Calu3 (cell line): ENCODE measurements at regions of chr4 and their contacts with region 1.

Region 1: DNA sequence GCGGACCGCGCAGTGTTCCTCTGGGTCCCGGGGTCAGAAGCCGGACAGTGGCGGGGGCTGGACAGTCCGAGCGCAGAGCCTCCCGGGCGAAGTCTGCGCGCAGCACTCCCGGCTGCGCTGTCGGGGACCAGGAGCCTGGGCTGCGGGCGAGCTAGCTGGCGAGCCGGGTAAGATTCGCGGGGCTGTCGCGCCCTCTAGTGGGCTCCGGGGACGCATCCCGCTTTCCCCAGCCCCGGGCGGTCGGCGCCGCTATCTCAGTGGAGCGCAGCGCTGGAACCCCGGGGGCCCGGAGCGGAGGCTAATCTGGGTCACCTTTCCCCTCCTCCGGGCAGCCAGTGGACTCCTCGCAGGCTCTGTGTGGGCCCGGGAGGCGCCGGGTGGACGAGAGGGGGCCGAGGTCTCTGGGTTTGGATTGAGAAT is 4.2 kb downstream of the PDGFRA start:
- DNase-seq: peak; percentile 86
- H3K4me3 Mint-ChIP-seq: peak overlapping the region; percentile 76
- H3K27ac Mint-ChIP-seq: no peak overlapping the region
- H3K4me1 Mint-ChIP-seq: peaks cover 18% of the 10 kb centered on the region
- H3K27me3 Mint-ChIP-seq: peaks cover 53% of the 10 kb centered on the region
- CTCF ChIP-seq: peak; percentile 40

Region 2: DNA sequence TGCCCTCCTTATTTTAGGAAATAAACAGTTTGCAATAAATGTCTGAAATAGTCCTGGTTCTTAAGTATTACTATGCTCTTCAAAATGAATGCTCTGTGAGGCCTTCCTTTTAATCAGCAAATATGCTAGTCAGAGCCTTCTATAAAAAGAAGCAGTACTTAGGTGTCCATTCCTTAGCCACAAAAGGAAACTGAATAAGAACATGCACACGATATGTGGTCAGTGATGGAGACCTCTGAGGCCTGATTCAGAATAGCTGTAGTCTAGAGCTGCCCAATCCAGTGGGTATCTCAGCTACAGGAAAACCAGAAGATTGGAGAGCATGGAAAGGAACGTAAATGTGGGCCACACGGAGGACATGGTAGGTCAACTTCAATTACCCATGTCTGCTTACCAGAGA is 1229.3 kb before region 1 on chr4:
- CTCF ChIA-PET with region 1: no interaction called
- intact Hi-C with region 1: loop called (anchors 5 kb)
- DNase-seq: no peak
- H3K4me3 Mint-ChIP-seq: no peak overlapping the region
- H3K27ac Mint-ChIP-seq: no peak overlapping the region
- H3K4me1 Mint-ChIP-seq: no peaks in the 10 kb centered on the region
- H3K27me3 Mint-ChIP-seq: no peaks in the 10 kb centered on the region
- CTCF ChIP-seq: no peak

Region 3: GRCh38 chr4:53196882-53197771 is 1036.2 kb before region 1 on chr4:
- CTCF ChIA-PET with region 1: no interaction called
- intact Hi-C with region 1: loop called (anchors 2 kb)
- DNase-seq: peak; percentile 9
- H3K4me3 Mint-ChIP-seq: no peak overlapping the region
- H3K27ac Mint-ChIP-seq: no peak overlapping the region
- H3K4me1 Mint-ChIP-seq: no peaks in the 10 kb centered on the region
- H3K27me3 Mint-ChIP-seq: no peaks in the 10 kb centered on the region
- CTCF ChIP-seq: peak; percentile 41

Region 4: GRCh38 chr4:53507671-53508286 is 725.5 kb before region 1 on chr4:
- CTCF ChIA-PET with region 1: interaction called, 3 read pairs
- intact Hi-C with region 1: loop called (anchors 5 kb)
- DNase-seq: peak; percentile 37
- H3K4me3 Mint-ChIP-seq: peak overlapping the region; percentile 78
- H3K27ac Mint-ChIP-seq: peak overlapping the region; percentile 72
- H3K4me1 Mint-ChIP-seq: no peaks in the 10 kb centered on the region
- H3K27me3 Mint-ChIP-seq: no peaks in the 10 kb centered on the region
- CTCF ChIP-seq: no peak

Region 5: DNA sequence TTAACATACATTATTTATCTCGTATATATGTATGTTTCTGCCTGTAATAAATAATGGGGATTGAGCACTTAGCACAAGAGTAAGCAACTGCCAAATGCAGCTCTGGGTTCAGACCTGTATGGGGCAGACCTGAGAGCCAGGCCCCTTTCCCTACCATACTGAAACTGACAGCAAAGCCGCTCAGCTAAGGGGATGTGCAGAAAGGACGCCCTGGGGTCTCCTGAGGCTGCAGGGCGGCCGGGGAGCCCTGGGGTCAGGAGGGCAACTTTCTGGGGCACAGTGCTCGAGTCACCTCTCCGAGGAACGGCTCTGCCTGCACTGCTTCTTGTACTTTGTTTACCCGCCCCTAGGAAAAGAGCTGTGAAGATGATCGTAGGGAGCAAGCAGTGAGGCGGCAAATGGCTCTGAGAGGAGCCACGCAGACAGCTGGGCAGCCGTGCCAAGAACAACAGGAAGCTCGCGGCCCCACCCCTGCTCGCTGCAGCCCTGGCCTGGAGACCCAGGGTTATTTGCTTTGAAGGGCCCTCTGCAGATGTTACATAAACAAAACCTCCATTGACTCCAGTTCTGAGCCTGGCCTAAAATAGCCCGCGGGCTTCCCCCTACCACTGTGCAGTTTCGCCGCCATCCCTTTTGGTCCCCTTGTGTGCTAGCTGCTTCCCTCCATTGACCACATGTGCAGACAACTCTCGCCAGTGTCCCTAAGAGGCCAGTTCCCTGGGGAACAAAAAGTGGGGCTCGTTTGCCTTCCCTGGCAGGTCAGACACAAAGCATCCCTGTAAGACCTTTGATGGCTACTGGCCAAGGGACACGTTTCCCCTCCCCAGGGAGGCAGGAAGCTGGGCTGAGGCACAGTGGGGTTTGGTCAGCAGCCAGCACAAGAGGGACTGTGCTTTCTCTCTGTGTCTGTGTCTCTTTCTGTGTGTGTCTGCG is 530.7 kb before region 1 on chr4:
- CTCF ChIA-PET with region 1: interaction called, 13 read pairs
- intact Hi-C with region 1: loop called (anchors 5 kb)
- DNase-seq: peak; percentile 39
- H3K4me3 Mint-ChIP-seq: peak overlapping the region; percentile 28
- H3K27ac Mint-ChIP-seq: no peak overlapping the region
- H3K4me1 Mint-ChIP-seq: peaks cover 17% of the 10 kb centered on the region
- H3K27me3 Mint-ChIP-seq: no peaks in the 10 kb centered on the region
- CTCF ChIP-seq: no peak

Region 6: DNA sequence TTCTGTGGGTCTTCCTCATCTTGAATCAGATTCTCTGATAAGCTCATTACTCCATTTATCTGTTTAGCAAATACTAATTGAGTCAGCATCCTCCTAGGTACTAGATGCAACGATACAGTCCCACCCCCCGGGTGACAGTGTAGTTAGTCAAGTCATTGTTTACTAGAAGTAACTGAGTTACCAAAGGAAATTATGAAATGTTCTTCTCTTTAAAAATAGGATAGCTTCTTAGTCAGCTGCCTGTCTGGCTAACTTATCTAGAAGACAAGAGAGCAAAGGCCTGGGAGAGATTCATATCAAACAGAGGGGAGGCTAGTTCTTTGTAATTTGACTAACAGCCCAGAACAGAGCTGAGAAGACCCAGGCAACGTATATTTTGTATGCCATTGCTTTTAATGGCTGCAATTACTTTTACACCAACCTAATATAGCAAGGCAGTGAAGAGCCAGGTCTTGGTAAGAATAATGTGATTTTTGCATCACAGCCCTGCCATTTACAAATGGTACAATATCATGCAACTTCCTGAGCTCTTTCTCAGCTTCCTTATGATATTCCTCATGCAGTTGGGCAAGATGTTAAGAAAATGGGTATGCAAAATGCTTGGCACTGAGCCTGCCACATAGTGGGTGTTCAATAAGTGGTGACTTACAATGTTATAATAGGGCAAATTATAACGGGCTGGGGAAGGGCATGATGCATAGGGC is 318.8 kb before region 1 on chr4:
- CTCF ChIA-PET with region 1: interaction called, 11 read pairs
- intact Hi-C with region 1: no loop called
- DNase-seq: peak; percentile 33
- H3K4me3 Mint-ChIP-seq: no peak overlapping the region
- H3K27ac Mint-ChIP-seq: no peak overlapping the region
- H3K4me1 Mint-ChIP-seq: peaks cover 43% of the 10 kb centered on the region
- H3K27me3 Mint-ChIP-seq: no peaks in the 10 kb centered on the region
- CTCF ChIP-seq: no peak

Region 7: GRCh38 chr4:54197926-54198325 is 35.4 kb before region 1 on chr4:
- CTCF ChIA-PET with region 1: no interaction called
- intact Hi-C with region 1: no loop called
- DNase-seq: no peak
- H3K4me3 Mint-ChIP-seq: no peak overlapping the region
- H3K27ac Mint-ChIP-seq: no peak overlapping the region
- H3K4me1 Mint-ChIP-seq: no peaks in the 10 kb centered on the region
- H3K27me3 Mint-ChIP-seq: no peaks in the 10 kb centered on the region
- CTCF ChIP-seq: no peak